Transverse colon (tissue), 4 donors: ENCODE measurements at regions of chr16 and their contacts with region 1.

Region 1: DNA sequence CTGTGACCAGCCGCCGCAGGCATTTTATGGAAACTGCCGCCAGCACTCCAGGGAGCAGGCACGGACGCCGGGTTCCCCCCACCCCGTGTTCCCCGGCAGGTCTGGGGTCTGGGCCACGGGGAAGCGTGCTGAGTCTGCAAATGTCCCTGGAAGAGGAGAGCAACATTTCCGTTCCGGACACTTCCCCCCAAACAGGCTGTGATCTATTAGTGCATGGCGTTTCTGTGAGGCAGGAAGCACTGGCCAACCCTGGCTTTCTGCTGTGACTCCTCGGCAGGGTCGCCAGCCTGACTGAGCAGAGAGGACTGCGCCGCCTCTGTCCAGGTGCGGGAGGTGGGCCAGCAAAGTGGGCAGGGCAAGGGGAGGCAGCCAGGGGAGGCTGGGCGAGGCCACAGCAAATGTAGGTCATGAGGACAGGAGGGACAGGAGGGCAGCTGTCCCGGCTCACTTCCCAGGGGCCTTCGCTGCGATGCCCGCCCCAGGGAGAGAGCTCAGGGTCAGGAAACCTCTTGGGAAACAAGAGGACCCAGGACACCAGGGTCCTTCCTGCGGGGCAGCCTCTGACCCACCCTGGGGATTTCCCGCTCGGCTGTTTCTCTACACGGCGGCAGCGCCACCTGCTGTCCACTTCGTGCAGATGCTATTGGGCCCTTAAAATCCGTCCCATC is 9.5 kb downstream of the FOXF1 start:
- DNase-seq: peak; percentile 61
- H3K4me3 ChIP-seq: peak overlapping the region in 2 of 4 donors; percentile 3
- H3K27ac ChIP-seq: peak overlapping the region; percentile 94 to 99 (median 96)
- H3K4me1 ChIP-seq: peaks cover 6 to 22% (median 9%) of the 10 kb centered on the region in 4 donors
- H3K27me3 ChIP-seq: peaks cover 36% of the 10 kb centered on the region
- CTCF ChIP-seq: peak; percentile 85 to 93 (median 91)
- EP300 ChIP-seq: no peak
- POLR2A ChIP-seq: no peak

Region 2: GRCh38 chr16:85799497-85800337 is 720.1 kb before region 1 on chr16 and contains the starts of genes COX4I1 and EMC8:
- in situ Hi-C with region 1: loop called in 1 of 4 experiments (anchors 25 kb)
- intact Hi-C with region 1: no loop called
- DNase-seq: peak; percentile 97
- H3K4me3 ChIP-seq: peak within 1 kb of the TSS; percentile 97 to 99 (median 98)
- H3K27ac ChIP-seq: peak within 1 kb of the TSS; percentile 94 to 99 (median 95)
- H3K4me1 ChIP-seq: peaks cover 21 to 32% (median 27%) of the 10 kb centered on the region in 4 donors
- H3K27me3 ChIP-seq: no peaks in the 10 kb centered on the region
- CTCF ChIP-seq: no peak
- EP300 ChIP-seq: no peak
- POLR2A ChIP-seq: peak; percentile 95
- total RNA-seq, gene COX4I1: 635 to 1,115 (median 865) TPM
- total RNA-seq, gene EMC8: 27.9 to 40.0 (median 31.8) TPM

Region 3: GRCh38 chr16:86072328-86073102 is 447.3 kb before region 1 on chr16:
- in situ Hi-C with region 1: loop called (anchors 10 kb)
- intact Hi-C with region 1: loop called (anchors 2 kb)
- DNase-seq: peak; percentile 69
- H3K4me3 ChIP-seq: no peak overlapping the region
- H3K27ac ChIP-seq: no peak overlapping the region
- H3K4me1 ChIP-seq: no peaks in the 10 kb centered on the region
- H3K27me3 ChIP-seq: no peaks in the 10 kb centered on the region
- CTCF ChIP-seq: peak; percentile 70 to 85 (median 81)
- EP300 ChIP-seq: no peak
- POLR2A ChIP-seq: no peak

Region 4: DNA sequence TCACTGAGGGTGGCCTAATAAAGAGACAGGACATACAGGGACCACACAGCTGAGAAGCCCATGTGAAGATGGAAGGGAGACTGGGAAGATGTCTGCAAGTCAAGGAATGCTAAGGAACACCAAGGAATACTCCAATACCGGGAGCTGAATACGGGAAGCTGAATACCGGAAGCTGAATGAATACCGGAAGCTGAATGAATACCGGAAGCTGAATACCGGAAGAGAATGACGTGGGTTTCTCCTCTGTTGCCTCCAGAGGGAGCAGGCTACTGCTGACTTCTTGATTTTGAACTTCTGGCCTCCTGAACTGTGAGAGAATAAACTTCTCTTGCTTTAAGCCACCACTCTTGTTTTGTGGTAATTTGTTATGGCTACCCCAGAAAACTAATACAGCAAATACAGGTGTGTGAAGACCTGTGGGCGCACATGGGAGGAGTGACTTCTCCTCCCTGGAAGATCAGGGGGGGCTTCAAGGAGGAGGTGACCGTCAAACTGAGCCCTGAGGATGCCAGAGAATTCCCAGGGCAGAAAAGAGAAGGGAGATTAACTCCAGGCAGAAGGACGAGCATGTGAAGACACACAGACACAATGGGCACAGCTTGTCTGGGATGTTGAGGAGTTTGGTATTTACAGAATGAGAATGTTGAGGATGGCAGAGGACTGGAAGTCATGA is 361.0 kb before region 1 on chr16:
- in situ Hi-C with region 1: no loop called
- intact Hi-C with region 1: loop called (anchors 5 kb)
- DNase-seq: no peak
- H3K4me3 ChIP-seq: no peak overlapping the region
- H3K27ac ChIP-seq: peak overlapping the region; percentile 61 to 87 (median 68)
- H3K4me1 ChIP-seq: peaks cover 0 to 10% (median 2%) of the 10 kb centered on the region in 4 donors
- H3K27me3 ChIP-seq: no peaks in the 10 kb centered on the region
- CTCF ChIP-seq: no peak
- EP300 ChIP-seq: no peak
- POLR2A ChIP-seq: no peak

Region 5: DNA sequence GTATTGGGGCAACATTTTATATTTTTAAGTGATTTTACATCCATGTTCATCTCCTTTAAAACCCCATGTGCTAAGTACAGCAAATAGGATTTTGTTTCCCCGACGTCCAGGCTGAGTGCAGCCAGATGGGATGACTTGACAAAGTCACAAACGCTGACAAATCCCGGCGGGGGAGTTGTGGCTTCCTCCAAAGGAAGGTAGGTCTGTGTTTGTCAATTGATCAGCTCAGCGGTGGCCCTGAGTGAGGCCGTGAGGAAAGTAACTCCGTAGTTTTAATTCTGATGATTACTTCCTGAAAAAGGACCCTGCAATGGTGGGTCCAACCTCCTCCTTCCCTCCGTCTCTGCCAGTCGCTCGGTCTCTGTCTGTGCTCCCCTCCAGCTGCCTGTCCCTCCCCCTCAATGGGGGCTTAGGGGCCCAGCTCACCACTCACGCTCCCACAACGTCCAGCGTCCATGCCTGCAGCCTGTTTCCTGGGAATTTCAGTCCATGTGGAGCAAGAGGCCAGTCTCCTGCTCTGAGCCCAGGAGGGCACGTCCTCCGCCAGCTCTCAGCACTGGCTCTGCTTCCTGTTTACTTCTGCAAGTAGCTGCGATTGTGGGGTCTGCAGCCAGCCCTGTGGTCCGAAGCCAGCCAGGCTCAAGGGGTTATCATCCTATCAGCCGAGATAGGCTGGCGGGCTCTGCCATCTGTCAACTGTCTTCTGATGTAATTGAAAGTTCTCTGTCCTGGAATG is 218.9 kb before region 1 on chr16:
- in situ Hi-C with region 1: loop called in 1 of 4 experiments (anchors 25 kb)
- intact Hi-C with region 1: loop called (anchors 5 kb)
- DNase-seq: no peak
- H3K4me3 ChIP-seq: peak overlapping the region in 1 of 4 donors; percentile 25
- H3K27ac ChIP-seq: peak overlapping the region; percentile 89 to 95 (median 92)
- H3K4me1 ChIP-seq: peaks cover 6 to 34% (median 13%) of the 10 kb centered on the region in 4 donors
- H3K27me3 ChIP-seq: peaks cover 25% of the 10 kb centered on the region
- CTCF ChIP-seq: no peak
- EP300 ChIP-seq: no peak
- POLR2A ChIP-seq: no peak